Stomach (tissue), 19 donors: ENCODE measurements at regions of chr2 and their contacts with region 1.

Region 1: GRCh38 chr2:120231974-120232635 is 8.9 kb upstream of the TMEM185B start:
- DNase-seq: peak; percentile 60 to 77
- H3K4me3 ChIP-seq: peak overlapping the region; percentile 40 to 57 (median 44)
- H3K27ac ChIP-seq: peak overlapping the region; percentile 67 to 90 (median 78)
- H3K4me1 ChIP-seq: peaks cover 0 to 48% (median 44%) of the 10 kb centered on the region in 4 donors
- H3K27me3 ChIP-seq: no peaks in the 10 kb centered on the region
- CTCF ChIP-seq: no peak
- EP300 ChIP-seq: no peak
- POLR2A ChIP-seq: no peak

Region 2: GRCh38 chr2:119759451-119760236 is 472.5 kb before region 1 on chr2 and contains the start of gene PTPN4:
- intact Hi-C with region 1: no loop called
- DNase-seq: peak; percentile 97 to 99
- H3K4me3 ChIP-seq: peak within 1 kb of the TSS; percentile 75 to 84 (median 80)
- H3K27ac ChIP-seq: peak within 1 kb of the TSS; percentile 93 to 97 (median 95)
- H3K4me1 ChIP-seq: peaks cover 6 to 48% (median 23%) of the 10 kb centered on the region in 4 donors
- H3K27me3 ChIP-seq: no peaks in the 10 kb centered on the region
- CTCF ChIP-seq: peak in 1 of 7 experiments; percentile 24
- EP300 ChIP-seq: no peak
- POLR2A ChIP-seq: peak in 2 of 4 donors; percentile 20 to 77
- total RNA-seq, gene PTPN4: 8.1 to 450 (median 52.5) TPM

Region 3: GRCh38 chr2:120312861-120313694 is 81.0 kb after region 1 on chr2:
- intact Hi-C with region 1: loop called (anchors 10 kb)
- DNase-seq: peak; percentile 84 to 94
- H3K4me3 ChIP-seq: peak overlapping the region; percentile 39 to 50 (median 45)
- H3K27ac ChIP-seq: peak overlapping the region in 4 of 5 donors; percentile 20 to 63 (median 54)
- H3K4me1 ChIP-seq: peaks cover 14 to 23% (median 14%) of the 10 kb centered on the region in 4 donors
- H3K27me3 ChIP-seq: no peaks in the 10 kb centered on the region
- CTCF ChIP-seq: peak in 5 of 7 experiments; percentile 78 to 92 (median 87)
- EP300 ChIP-seq: no peak
- POLR2A ChIP-seq: no peak